Cardiac septum (tissue), 1 donor: ENCODE measurements at regions of chr4 and their contacts with region 1.

Region 1: GRCh38 chr4:31674313-31674947 is 954.3 kb downstream of the PCDH7 start:
- DNase-seq: no peak

Region 2: GRCh38 chr4:30714408-30715027 is 959.9 kb before region 1 on chr4:
- intact Hi-C with region 1: loop called (anchors 5 kb)
- DNase-seq: no peak

Region 3: DNA sequence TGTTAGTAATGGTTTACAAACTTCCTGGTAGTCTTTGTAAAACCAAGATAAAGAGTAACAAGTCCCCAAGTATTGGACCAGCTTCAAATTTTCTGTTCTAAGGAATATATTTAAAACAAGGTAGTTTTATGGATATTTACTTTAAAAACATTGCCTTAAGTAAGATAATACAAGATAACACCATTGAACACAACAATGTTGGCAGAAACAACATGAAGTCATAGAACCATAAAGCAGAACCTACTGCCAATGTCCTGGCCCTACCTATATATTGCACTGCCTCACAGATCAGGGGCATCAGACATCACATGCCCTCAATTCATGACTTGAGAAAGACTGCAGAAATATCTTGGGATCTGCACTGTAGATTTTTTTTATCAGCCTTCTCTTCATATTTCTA is 221.9 kb after region 1 on chr4:
- intact Hi-C with region 1: no loop called
- DNase-seq: no peak

Region 4: GRCh38 chr4:32025851-32026459 is 351.5 kb after region 1 on chr4:
- intact Hi-C with region 1: no loop called
- DNase-seq: no peak